ENCODE measurements at regions of chr3 and their contacts with region 1.

Region 1: GRCh38 chr3:178325330-178325729 is 210.9 kb upstream of the KCNMB2 start:
- DNase-seq: peak; percentile 76
- H3K4me3 ChIP-seq: no peak overlapping the region
- H3K27ac ChIP-seq: peak overlapping the region; percentile 2
- H3K4me1 ChIP-seq: peaks cover 13% of the 10 kb centered on the region
- H3K27me3 ChIP-seq: no peaks in the 10 kb centered on the region
- CTCF ChIP-seq: peak in 1 of 2 donors; percentile 15
- POLR2A ChIP-seq: no peak

Region 2: DNA sequence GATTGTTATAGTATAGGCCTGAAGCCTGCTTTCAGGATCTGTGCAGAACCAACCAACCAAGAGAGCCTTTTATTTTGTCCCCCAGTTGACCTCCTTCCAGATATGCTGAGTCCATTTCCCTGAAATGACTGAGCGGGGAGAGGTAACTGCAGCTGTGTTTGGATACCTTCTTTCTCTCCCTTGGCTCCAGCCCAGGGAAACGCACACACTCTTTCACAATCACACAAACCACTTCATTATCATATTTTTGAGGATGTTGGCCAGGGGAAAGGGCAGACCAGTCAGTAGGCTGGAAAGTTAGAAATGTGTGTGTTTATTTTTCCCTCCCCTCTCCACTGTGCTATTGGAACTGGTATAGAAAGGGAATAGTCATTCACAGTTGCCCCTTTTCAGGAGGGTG is 710.3 kb before region 1 on chr3:
- CTCF ChIA-PET with region 1: no interaction called
- POLR2A ChIA-PET with region 1: no interaction called
- dilution Hi-C with region 1: no loop called
- intact Hi-C with region 1: loop called (anchors 10 kb)
- DNase-seq: peak; percentile 90
- H3K4me3 ChIP-seq: no peak overlapping the region
- H3K27ac ChIP-seq: no peak overlapping the region
- H3K4me1 ChIP-seq: peaks cover 14% of the 10 kb centered on the region
- H3K27me3 ChIP-seq: no peaks in the 10 kb centered on the region
- CTCF ChIP-seq: no peak
- POLR2A ChIP-seq: no peak

Region 3: DNA sequence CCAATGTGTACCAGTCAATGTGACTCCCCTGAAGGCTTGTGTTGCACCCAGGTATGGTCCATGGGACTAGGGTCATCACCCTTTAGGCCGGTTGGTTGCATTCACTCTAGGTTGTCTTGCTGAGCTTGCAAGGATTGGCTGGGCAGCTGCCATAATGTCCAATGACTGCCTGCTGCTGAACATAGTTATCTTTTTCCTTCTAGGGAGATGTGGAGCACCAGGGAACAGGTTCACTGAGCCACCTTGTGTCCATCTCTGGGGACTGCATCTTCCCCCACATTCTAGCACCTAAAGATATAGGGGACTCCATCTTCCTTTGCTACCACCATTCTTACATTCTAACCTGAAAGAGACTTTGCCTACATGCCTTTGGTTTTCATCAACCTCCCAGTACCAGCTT is 547.6 kb before region 1 on chr3:
- CTCF ChIA-PET with region 1: no interaction called
- POLR2A ChIA-PET with region 1: no interaction called
- dilution Hi-C with region 1: no loop called
- intact Hi-C with region 1: loop called (anchors 1 kb)
- DNase-seq: peak; percentile 41
- H3K4me3 ChIP-seq: no peak overlapping the region
- H3K27ac ChIP-seq: no peak overlapping the region
- H3K4me1 ChIP-seq: peaks cover 13% of the 10 kb centered on the region
- H3K27me3 ChIP-seq: no peaks in the 10 kb centered on the region
- CTCF ChIP-seq: peak; percentile 52 to 57
- POLR2A ChIP-seq: no peak

Region 4: DNA sequence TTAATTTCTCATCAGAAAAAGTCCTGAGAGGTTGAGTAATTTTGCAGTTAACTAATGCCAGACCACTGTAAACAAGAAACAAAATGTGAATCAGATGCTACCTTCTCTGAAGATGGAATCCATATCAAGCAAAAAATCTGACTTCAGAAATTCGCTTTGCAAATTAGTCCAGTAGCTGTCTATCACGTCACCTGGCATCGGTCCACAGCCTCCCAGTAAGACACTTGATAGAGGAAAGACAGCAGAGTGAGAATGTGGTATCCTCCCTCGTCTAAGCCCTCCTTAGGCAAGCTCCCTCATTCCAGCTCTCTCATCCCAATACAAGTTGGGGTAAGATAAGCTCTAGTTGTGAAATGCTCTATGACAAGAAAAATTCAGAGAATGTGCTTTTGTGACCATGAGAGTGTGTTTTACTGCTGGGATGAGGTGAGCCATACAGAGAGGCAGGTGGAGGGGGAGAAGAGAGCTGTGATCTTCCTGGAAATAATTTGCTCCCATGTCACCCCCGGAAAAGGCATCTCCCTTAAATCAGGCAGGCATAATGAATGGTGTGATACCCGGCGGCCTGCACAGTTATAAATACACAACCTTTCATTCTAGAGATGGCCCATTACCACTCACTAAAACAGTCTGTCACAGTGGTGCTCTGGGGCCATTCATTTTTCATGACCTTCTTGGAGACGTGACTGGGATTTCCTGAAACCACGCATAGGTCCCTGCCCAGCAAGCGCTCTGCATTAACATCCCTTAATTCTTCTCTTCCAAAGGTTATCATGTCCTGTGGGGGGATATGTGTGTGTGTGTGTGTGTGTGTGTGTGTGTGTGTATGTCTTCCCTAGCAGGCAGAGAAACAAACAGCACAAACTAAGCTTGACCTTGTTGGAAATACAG is 391.1 kb before region 1 on chr3:
- CTCF ChIA-PET with region 1: no interaction called
- POLR2A ChIA-PET with region 1: no interaction called
- dilution Hi-C with region 1: no loop called
- intact Hi-C with region 1: loop called (anchors 1 kb)
- DNase-seq: peak; percentile 12
- H3K4me3 ChIP-seq: no peak overlapping the region
- H3K27ac ChIP-seq: no peak overlapping the region
- H3K4me1 ChIP-seq: peaks cover 21% of the 10 kb centered on the region
- H3K27me3 ChIP-seq: no peaks in the 10 kb centered on the region
- CTCF ChIP-seq: no peak
- POLR2A ChIP-seq: no peak

Region 5: GRCh38 chr3:178022599-178022998 is 302.7 kb before region 1 on chr3:
- CTCF ChIA-PET with region 1: no interaction called
- POLR2A ChIA-PET with region 1: no interaction called
- dilution Hi-C with region 1: no loop called
- intact Hi-C with region 1: no loop called
- DNase-seq: no peak
- H3K4me3 ChIP-seq: no peak overlapping the region
- H3K27ac ChIP-seq: no peak overlapping the region
- H3K4me1 ChIP-seq: no peaks in the 10 kb centered on the region
- H3K27me3 ChIP-seq: no peaks in the 10 kb centered on the region
- CTCF ChIP-seq: no peak
- POLR2A ChIP-seq: no peak

Region 6: GRCh38 chr3:178155521-178155920 is 169.8 kb before region 1 on chr3:
- CTCF ChIA-PET with region 1: no interaction called
- POLR2A ChIA-PET with region 1: no interaction called
- dilution Hi-C with region 1: no loop called
- intact Hi-C with region 1: loop called (anchors 1 kb)
- DNase-seq: no peak
- H3K4me3 ChIP-seq: no peak overlapping the region
- H3K27ac ChIP-seq: no peak overlapping the region
- H3K4me1 ChIP-seq: peaks cover 20% of the 10 kb centered on the region
- H3K27me3 ChIP-seq: no peaks in the 10 kb centered on the region
- CTCF ChIP-seq: no peak
- POLR2A ChIP-seq: no peak

Region 7: GRCh38 chr3:178275793-178276192 is 49.5 kb before region 1 on chr3:
- CTCF ChIA-PET with region 1: no interaction called
- POLR2A ChIA-PET with region 1: no interaction called
- dilution Hi-C with region 1: no loop called
- intact Hi-C with region 1: loop called (anchors 1 kb)
- DNase-seq: no peak
- H3K4me3 ChIP-seq: no peak overlapping the region
- H3K27ac ChIP-seq: no peak overlapping the region
- H3K4me1 ChIP-seq: peaks cover 15% of the 10 kb centered on the region
- H3K27me3 ChIP-seq: no peaks in the 10 kb centered on the region
- CTCF ChIP-seq: no peak
- POLR2A ChIP-seq: no peak

Measured in endothelial cell of umbilical vein (primary cell).